Activated CD4-positive, alpha-beta T cell treated with anti-CD3 and anti-CD28 coated beads for 36 hours (primary cell): ENCODE measurements at regions of chr7 and their contacts with region 1.

Region 1: DNA sequence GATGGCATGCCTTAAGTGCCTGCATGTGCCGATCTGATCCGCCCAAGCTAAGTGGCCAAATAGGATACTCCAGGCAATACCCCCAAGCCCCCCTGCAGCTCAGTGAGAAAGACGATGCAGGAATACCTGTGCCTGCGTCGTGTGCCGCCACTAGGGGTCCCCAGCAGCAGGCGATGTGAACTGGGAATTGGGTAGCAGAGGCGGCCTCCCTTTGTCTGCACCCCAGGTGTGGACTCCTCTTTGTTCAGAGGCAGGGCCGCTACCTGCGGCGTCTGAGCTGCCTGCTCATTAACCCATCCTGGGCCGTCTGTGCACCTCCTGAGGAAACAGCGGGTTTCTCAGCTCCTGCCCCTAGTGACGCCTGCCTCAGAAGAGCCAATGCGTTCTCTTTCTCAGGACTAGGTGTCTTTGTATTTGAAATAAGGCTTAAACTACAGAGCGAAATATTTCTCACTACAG is 4.8 kb upstream of the CHN2 start:
- DNase-seq: peak; percentile 77
- ATAC-seq: peak; percentile 83
- H3K4me3 Mint-ChIP-seq: no peak overlapping the region
- H3K27ac Mint-ChIP-seq: no peak overlapping the region
- H3K4me1 Mint-ChIP-seq: no peaks in the 10 kb centered on the region
- H3K27me3 Mint-ChIP-seq: peaks cover 27% of the 10 kb centered on the region

Region 2: DNA sequence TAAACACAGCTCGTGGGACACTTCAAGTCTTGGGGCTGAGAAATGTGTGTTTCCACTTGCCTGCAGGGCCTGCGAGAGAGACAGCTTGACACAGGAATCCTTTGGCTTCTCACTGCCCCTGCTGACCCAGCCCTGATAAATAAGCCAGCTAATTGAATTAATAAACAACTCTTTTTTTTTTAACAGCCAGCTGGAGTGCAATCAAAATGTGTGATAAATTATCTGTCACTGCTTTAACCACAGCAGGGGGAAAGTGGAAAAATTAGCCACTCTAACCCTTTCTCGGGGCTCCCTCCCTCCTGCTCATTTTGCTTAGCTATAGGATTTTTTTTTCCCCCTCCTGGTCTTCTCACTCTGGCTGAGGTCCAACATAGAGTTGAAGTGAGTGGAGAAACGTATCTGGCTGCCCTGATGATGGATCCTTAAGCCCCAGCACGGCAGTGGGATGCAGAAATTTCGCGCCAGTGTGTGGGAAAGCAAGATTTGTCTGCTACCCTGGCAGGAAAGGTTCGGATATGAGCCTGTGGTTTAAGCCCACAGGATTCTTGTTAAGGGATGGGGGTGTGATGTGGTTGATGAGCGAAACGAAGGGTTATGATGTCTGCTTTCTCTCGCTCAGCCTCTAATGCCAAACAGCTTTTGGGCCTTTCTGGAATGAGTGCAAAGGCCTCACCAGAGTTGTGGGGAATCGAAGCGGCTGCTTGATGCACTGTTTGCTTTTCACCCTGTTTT is 405.4 kb before region 1 on chr7:
- CTCF ChIA-PET with region 1: no interaction called
- POLR2A ChIA-PET with region 1: no interaction called
- intact Hi-C with region 1: no loop called
- DNase-seq: no peak
- ATAC-seq: no peak
- H3K4me3 Mint-ChIP-seq: no peak overlapping the region
- H3K27ac Mint-ChIP-seq: no peak overlapping the region
- H3K4me1 Mint-ChIP-seq: no peaks in the 10 kb centered on the region
- H3K27me3 Mint-ChIP-seq: peaks cover 7% of the 10 kb centered on the region

Region 3: DNA sequence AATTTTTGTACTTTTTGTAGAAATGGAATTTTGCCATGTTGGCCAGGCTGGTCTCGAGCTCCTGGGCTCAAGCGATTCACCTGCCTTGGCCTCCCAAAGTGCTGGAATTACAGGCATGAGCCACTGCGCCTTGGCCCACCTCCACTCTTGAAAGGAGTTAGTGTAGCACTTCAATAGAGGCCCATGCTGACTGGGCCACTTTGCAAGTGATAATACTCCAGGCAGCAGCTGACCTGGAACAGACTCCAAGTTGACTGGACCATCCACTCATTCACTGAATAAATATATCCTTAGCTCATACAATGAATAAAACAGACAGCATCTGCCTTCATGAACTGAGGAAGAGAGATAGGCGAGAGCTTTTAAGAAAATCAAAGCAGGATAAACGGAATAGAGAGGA is 58.1 kb before region 1 on chr7:
- CTCF ChIA-PET with region 1: interaction called, 10 read pairs
- POLR2A ChIA-PET with region 1: no interaction called
- intact Hi-C with region 1: no loop called
- DNase-seq: no peak
- ATAC-seq: no peak
- H3K4me3 Mint-ChIP-seq: no peak overlapping the region
- H3K27ac Mint-ChIP-seq: no peak overlapping the region
- H3K4me1 Mint-ChIP-seq: no peaks in the 10 kb centered on the region
- H3K27me3 Mint-ChIP-seq: peaks cover 22% of the 10 kb centered on the region

Region 4: GRCh38 chr7:29345600-29345999 is 155.8 kb after region 1 on chr7:
- CTCF ChIA-PET with region 1: interaction called, 6 read pairs
- POLR2A ChIA-PET with region 1: no interaction called
- intact Hi-C with region 1: loop called (anchors 1 to 5 kb)
- DNase-seq: peak; percentile 50
- ATAC-seq: no peak
- H3K4me3 Mint-ChIP-seq: no peak overlapping the region
- H3K27ac Mint-ChIP-seq: no peak overlapping the region
- H3K4me1 Mint-ChIP-seq: no peaks in the 10 kb centered on the region
- H3K27me3 Mint-ChIP-seq: no peaks in the 10 kb centered on the region